Activated CD4-positive, alpha-beta T cell treated with anti-CD3 and anti-CD28 coated beads, Interleukin-2, amount 10 ng/mL, durations not matched to agents 24 days and 14 days (primary cell): ENCODE measurements at regions of chr12 and their contacts with region 1.

Region 1: GRCh38 chr12:89389755-89390661 is 37.7 kb upstream of the DUSP6 start:
- DNase-seq: no peak
- H3K4me3 Mint-ChIP-seq: no peak overlapping the region
- H3K27ac Mint-ChIP-seq: peak overlapping the region; percentile 67
- H3K4me1 Mint-ChIP-seq: peaks cover 26% of the 10 kb centered on the region
- H3K27me3 Mint-ChIP-seq: no peaks in the 10 kb centered on the region

Region 2: GRCh38 chr12:89345830-89346740 is 43.9 kb before region 1 on chr12:
- intact Hi-C with region 1: no loop called
- DNase-seq: peak; percentile 83
- H3K4me3 Mint-ChIP-seq: peak overlapping the region; percentile 98
- H3K27ac Mint-ChIP-seq: peak overlapping the region; percentile 90
- H3K4me1 Mint-ChIP-seq: peaks cover 56% of the 10 kb centered on the region
- H3K27me3 Mint-ChIP-seq: no peaks in the 10 kb centered on the region

Region 3: DNA sequence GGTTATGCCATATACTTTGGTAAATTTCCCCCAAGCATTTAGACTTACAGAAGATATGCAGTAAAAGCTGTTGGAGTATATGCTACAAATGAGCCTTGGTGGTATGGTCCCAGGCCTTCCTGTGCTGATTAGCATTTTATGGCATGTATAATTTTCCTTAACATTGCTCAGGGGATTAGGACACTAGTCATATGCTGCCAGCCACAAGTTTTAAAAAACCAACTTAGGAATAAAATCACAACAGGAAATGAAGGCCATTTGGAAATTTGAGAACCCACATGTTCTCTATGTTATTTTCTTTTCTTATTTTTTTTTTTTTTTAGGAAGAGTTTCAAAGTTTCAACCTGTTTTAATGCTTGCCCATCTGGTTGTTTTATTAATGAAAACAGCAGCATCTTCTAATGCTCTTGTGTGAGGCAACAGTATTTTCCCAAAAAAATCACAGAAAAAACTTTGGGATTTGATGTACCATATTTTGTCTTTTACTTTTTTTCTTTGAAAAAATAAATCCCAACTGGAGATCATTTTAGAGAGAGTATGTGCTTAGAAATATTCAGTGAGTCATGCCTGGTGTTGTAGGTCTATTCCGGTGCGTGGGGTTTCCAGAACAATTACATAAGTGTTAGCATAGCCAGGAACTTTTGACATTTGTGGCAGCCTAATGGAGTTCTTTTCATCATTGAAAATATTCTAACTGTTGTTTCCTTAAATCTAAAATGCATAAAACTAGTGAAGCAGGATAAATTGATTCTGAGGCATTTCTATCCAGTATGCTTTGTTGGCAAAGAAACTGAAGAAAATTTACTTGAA is 16.0 kb before region 1 on chr12:
- intact Hi-C with region 1: loop called (anchors 1 kb)
- DNase-seq: no peak
- H3K4me3 Mint-ChIP-seq: no peak overlapping the region
- H3K27ac Mint-ChIP-seq: no peak overlapping the region
- H3K4me1 Mint-ChIP-seq: peaks cover 38% of the 10 kb centered on the region
- H3K27me3 Mint-ChIP-seq: no peaks in the 10 kb centered on the region

Region 4: GRCh38 chr12:89427508-89428156 is 37.6 kb after region 1 on chr12:
- intact Hi-C with region 1: loop called (anchors 5 kb)
- DNase-seq: peak; percentile 79
- H3K4me3 Mint-ChIP-seq: peak overlapping the region; percentile 68
- H3K27ac Mint-ChIP-seq: peak overlapping the region; percentile 84
- H3K4me1 Mint-ChIP-seq: peaks cover 31% of the 10 kb centered on the region
- H3K27me3 Mint-ChIP-seq: no peaks in the 10 kb centered on the region